GM10248 (cell line): ENCODE measurements at regions of chr12 and their contacts with region 1.

Region 1: GRCh38 chr12:108457006-108457733 is 57.9 kb upstream of the FICD start:
- DNase-seq: peak; percentile 75
- CTCF ChIP-seq: peak; percentile 72

Region 2: GRCh38 chr12:108063192-108063591 is 394.0 kb before region 1 on chr12:
- CTCF ChIA-PET with region 1: interaction called, 10 read pairs
- POLR2A ChIA-PET with region 1: no interaction called
- DNase-seq: no peak
- CTCF ChIP-seq: peak; percentile 24

Region 3: DNA sequence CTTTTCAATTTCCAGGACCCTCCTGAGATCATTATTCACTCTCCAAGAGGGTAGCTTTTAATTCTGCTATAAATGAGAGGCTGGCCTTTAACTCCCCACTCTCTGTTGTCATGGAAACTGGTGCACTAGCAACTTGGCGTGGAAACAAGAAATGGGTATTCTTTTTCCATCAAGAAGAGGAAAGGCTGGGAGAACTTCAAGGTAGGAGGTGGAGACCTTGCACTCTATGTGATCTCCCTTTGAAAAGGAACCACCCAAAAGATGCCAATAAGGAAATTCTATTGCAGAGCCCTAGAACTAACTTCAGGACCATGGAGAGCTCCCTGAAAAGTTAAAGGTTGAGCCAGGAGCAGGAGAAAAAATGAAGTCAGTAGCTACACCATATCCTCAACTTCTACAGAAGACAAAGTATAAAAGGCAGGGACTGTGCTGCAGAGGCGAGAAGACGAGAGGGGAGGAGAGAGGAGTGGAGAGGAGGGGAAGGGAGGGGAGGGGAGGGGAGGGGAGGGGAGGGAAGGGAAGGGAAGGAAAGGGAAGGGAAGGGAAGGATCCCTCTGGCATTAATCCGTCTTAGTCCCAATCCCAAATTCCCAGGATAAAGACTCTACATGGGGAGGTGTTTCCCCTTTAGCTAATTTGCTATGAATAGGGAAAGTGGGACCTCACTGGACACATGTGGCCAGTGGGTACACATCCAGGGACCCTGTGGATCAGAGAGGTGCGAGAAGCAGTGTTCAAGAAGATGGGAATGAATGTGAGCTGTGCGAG is 11.2 kb after region 1 on chr12:
- CTCF ChIA-PET with region 1: interaction called, 29 read pairs
- POLR2A ChIA-PET with region 1: no interaction called
- DNase-seq: peak; percentile 67
- CTCF ChIP-seq: no peak

Region 4: DNA sequence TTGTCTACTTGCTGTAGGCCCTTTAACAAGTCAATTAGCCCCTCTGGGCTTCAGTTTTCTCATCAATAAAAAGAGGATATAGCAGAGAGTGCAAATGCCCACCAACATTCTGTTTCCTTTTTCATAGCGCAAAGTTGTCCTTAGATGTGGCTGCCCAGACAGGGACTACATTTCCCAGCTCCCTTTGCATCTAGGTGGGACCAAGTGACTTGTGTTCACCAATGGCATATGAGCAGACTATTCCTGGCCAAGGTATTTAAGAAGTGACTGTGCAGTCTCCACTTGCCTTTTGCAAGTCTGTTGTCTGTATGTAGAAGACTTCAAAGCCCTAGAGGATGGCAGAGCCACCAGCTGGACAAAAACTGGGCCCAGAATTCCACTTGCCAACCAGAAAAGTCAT is 482.4 kb after region 1 on chr12:
- CTCF ChIA-PET with region 1: no interaction called
- POLR2A ChIA-PET with region 1: no interaction called
- DNase-seq: no peak
- CTCF ChIP-seq: no peak